Lower lobe of right lung (tissue), 2 donors: ENCODE measurements at regions of chr5 and their contacts with region 1.

Region 1: GRCh38 chr5:151825445-151825844 is 53.7 kb downstream of the G3BP1 start:
- DNase-seq: no peak
- ATAC-seq: peak; percentile 68 to 78
- H3K4me3 ChIP-seq: no peak overlapping the region
- H3K27ac ChIP-seq: no peak overlapping the region
- H3K4me1 ChIP-seq: no peaks in the 10 kb centered on the region
- H3K27me3 ChIP-seq: no peaks in the 10 kb centered on the region
- CTCF ChIP-seq: peak; percentile 77

Region 2: GRCh38 chr5:152142840-152143469 is 317.5 kb after region 1 on chr5:
- intact Hi-C with region 1: loop called (anchors 10 kb)
- DNase-seq: peak; percentile 55
- ATAC-seq: peak; percentile 73 to 79
- H3K4me3 ChIP-seq: no peak overlapping the region
- H3K27ac ChIP-seq: no peak overlapping the region
- H3K4me1 ChIP-seq: no peaks in the 10 kb centered on the region
- H3K27me3 ChIP-seq: no peaks in the 10 kb centered on the region
- CTCF ChIP-seq: peak; percentile 87